Transverse colon (tissue), 4 donors: ENCODE measurements at regions of chr12 and their contacts with region 1.

Region 1: DNA sequence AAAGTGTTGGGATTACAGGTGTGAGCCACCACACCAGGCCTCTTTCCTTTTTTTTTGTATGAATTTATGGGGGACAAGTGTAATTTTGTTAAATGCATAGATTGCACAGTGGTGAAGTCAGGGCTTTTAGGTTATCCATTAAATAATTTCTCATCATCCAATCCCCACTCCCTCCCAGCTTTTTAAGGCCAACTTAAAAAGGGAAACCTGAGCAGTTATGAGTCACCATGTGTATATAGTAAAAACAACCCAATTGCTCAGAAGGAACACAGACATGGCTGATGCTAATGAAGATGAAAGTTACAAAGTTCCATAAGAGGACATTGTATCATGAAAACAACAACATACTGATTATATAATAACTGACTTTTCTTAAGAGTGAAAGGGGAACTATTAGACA is 25.6 kb upstream of the ARID2 start:
- DNase-seq: no peak
- H3K4me3 ChIP-seq: no peak overlapping the region
- H3K27ac ChIP-seq: no peak overlapping the region
- H3K4me1 ChIP-seq: peaks cover 0 to 4% (median 0%) of the 10 kb centered on the region in 4 donors
- H3K27me3 ChIP-seq: no peaks in the 10 kb centered on the region
- CTCF ChIP-seq: no peak
- EP300 ChIP-seq: no peak
- POLR2A ChIP-seq: no peak

Region 2: DNA sequence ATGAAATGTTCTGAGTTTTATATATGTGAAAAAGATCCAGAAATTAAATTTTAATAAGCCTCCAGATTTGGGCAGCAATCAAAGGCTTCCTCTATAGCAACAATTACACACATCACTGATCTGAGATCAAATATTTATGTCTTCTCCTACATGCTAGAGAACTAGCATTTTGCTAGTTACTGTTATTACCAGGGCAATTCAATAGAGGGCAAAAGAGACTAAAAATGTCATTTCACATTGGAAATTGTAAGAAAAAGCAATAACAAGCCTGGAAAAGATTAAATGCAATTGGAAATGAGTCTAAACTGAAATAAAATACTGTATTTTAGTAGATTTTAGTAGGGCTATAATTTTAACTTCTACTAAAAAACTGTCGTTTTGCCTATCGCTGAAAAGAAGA is 520.7 kb before region 1 on chr12:
- in situ Hi-C with region 1: loop called in 1 of 4 experiments (anchors 25 kb)
- intact Hi-C with region 1: no loop called
- DNase-seq: no peak
- H3K4me3 ChIP-seq: no peak overlapping the region
- H3K27ac ChIP-seq: no peak overlapping the region
- H3K4me1 ChIP-seq: no peaks in the 10 kb centered on the region
- H3K27me3 ChIP-seq: no peaks in the 10 kb centered on the region
- CTCF ChIP-seq: peak in 4 of 5 experiments; percentile 12 to 41 (median 17)
- EP300 ChIP-seq: no peak
- POLR2A ChIP-seq: no peak

Region 3: DNA sequence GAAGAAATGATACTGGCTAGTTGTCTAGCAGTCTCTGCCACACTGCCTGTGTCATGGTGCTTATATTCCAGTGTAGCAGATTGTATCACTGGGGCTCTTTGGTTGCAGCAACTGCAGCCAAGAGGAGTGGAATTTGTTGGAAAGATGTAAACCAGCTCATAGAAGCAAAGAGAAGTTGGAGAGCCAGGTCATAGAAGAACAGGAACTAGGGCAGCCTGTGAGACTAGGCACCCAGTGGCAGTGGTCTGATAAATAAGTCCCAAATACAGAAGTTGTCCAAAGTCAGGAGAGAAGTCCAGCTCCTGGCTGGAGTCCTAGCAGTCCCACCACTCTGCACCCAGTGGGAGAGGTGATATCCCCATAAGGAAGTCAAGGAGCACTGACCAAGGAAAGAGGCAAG is 146.9 kb before region 1 on chr12:
- in situ Hi-C with region 1: loop called in 1 of 4 experiments (anchors 25 kb)
- intact Hi-C with region 1: no loop called
- DNase-seq: no peak
- H3K4me3 ChIP-seq: no peak overlapping the region
- H3K27ac ChIP-seq: no peak overlapping the region
- H3K4me1 ChIP-seq: no peaks in the 10 kb centered on the region
- H3K27me3 ChIP-seq: no peaks in the 10 kb centered on the region
- CTCF ChIP-seq: no peak
- EP300 ChIP-seq: no peak
- POLR2A ChIP-seq: no peak